ENCODE measurements at regions of chr13 and their contacts with region 1.

Region 1: DNA sequence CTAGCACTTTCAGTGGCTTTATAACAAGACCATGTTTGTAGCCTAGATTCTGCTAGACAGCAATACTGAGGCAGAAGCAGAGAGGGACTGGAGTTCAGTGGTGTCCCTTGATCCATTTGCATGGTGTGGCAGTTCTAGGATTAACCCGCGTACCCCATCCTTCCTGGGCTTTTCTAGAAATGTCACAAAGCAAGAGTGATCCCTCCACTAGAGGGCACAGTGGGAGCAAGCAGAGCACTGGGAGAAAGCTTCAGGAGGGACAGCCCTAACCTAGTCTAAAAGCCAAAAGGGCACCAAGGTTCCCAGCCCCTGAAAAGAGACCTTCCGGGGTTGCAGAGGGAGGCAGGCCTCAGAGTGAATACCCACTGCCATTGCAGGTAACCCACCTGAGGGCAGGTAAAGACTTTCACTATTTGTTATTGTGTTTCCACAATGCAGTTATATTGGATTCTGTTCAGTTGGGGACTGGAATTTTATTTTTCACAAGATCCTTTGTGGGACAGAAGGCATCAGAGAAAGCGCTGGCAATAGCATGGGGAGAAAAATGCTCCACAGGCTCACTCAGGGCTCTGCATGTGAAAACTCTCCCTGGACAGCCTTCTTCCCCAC is 170.6 kb downstream of the FLT1 start:
- DNase-seq: peak; percentile 14 to 60 (median 51)
- ATAC-seq: peak; percentile 86
- H3K4me3 ChIP-seq: no peak overlapping the region
- H3K4me3 Mint-ChIP-seq: no peak overlapping the region
- H3K27ac ChIP-seq: no peak overlapping the region
- H3K27ac Mint-ChIP-seq: no peak overlapping the region
- H3K4me1 ChIP-seq: no peaks in the 10 kb centered on the region
- H3K4me1 Mint-ChIP-seq: peaks cover 0 to 5% (median 0%) of the 10 kb centered on the region in 7 donors
- H3K27me3 ChIP-seq: no peaks in the 10 kb centered on the region
- H3K27me3 Mint-ChIP-seq: peaks cover 0 to 6% (median 0%) of the 10 kb centered on the region in 5 donors

Region 2: DNA sequence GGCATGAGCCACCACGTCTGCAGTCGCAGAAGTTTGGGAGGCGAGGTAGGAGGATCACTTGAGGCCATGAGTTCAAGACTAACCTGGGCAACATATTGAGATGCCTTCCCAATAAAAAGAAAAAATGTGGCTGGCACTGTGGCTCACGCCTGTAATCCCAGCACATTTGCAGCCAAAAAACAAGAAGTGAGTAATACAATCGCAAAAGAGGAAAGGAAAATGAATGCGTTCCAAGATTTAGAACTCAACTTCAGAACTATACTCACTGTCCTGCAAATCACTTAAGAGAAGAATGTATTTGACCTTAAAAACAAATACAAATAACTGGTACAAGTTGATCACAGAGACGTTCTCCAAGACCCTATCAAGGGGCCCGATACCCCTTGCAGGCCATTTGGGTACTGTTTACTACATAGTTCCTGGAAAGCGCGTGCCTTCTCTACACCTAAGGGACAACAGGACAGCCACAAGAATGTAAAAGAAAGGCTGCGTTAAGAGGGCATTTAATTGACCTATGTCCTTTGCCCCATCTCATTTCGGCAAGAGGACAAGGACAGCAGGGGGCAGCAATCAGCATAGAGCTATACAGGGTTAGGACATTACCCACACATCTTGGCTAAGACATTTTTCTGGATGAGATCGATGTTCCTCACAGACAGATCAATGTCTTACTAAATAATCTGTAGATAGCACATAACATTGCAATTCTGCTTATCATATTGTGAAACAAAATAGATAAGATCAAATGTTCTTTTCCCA is 265.2 kb before region 1 on chr13:
- CTCF ChIA-PET with region 1: no interaction called
- POLR2A ChIA-PET with region 1: no interaction called
- intact Hi-C with region 1: loop called in 1 of 2 experiments (anchors 2 kb)
- DNase-seq: peak in 7 of 9 donors; percentile 10 to 33 (median 17)
- ATAC-seq: peak; percentile 38
- H3K4me3 ChIP-seq: no peak overlapping the region
- H3K4me3 Mint-ChIP-seq: no peak overlapping the region
- H3K27ac ChIP-seq: no peak overlapping the region
- H3K27ac Mint-ChIP-seq: peak overlapping the region in 1 of 9 donors; percentile 62
- H3K4me1 ChIP-seq: no peaks in the 10 kb centered on the region
- H3K4me1 Mint-ChIP-seq: peaks cover 0 to 4% (median 0%) of the 10 kb centered on the region in 7 donors
- H3K27me3 ChIP-seq: peaks cover 2 to 3% of the 10 kb centered on the region in 2 donors
- H3K27me3 Mint-ChIP-seq: peaks cover 8 to 24% (median 16%) of the 10 kb centered on the region in 5 donors

Region 3: DNA sequence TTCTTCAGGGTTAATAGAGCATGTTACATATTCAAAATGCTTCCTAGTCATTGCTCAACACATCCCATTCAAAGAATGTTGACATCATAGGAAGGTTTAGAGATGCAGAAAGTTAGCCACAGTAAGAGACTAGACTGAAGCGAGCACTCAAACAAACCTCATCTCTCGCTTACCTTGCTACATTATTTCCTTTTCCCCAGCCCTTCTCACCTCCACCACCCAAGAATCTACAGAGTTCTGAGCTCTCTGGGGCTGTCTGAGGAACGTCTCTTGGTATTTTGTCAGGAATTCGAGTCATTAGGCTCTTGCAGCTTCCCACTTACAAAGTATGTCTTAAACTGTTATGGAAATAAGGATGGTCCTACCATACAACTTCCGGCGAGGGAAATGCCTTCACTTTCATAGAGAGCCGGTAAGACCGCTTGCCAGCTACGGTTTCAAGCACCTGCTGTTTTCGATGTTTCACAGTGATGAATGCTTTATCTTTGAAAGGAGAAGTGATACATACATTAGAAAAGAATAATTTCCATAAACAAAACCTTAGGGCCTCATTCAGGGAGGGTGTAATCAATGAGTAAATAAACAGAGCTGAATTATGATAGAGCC is 105.5 kb after region 1 on chr13:
- CTCF ChIA-PET with region 1: no interaction called
- POLR2A ChIA-PET with region 1: no interaction called
- intact Hi-C with region 1: no loop called
- DNase-seq: no peak
- ATAC-seq: no peak
- H3K4me3 ChIP-seq: no peak overlapping the region
- H3K4me3 Mint-ChIP-seq: no peak overlapping the region
- H3K27ac ChIP-seq: no peak overlapping the region
- H3K27ac Mint-ChIP-seq: peak overlapping the region in 1 of 9 donors; percentile 18
- H3K4me1 ChIP-seq: no peaks in the 10 kb centered on the region
- H3K4me1 Mint-ChIP-seq: peaks cover 0 to 8% (median 0%) of the 10 kb centered on the region in 7 donors
- H3K27me3 ChIP-seq: peaks cover 0 to 3% of the 10 kb centered on the region in 2 donors
- H3K27me3 Mint-ChIP-seq: peaks cover 0 to 9% (median 0%) of the 10 kb centered on the region in 5 donors

Region 4: GRCh38 chr13:28658796-28659620 is 334.7 kb after region 1 on chr13 and contains the start of gene POMP:
- CTCF ChIA-PET with region 1: no interaction called
- POLR2A ChIA-PET with region 1: no interaction called
- intact Hi-C with region 1: loop called in 1 of 2 experiments (anchors 1 kb)
- DNase-seq: peak; percentile 83 to 96 (median 93)
- ATAC-seq: peak; percentile 95
- H3K4me3 ChIP-seq: peak within 1 kb of the TSS; percentile 86
- H3K4me3 Mint-ChIP-seq: peak within 1 kb of the TSS; percentile 88 to 100 (median 98)
- H3K27ac ChIP-seq: peak within 1 kb of the TSS; percentile 96
- H3K27ac Mint-ChIP-seq: peak within 1 kb of the TSS; percentile 94 to 99 (median 99)
- H3K4me1 ChIP-seq: peaks cover 25 to 29% of the 10 kb centered on the region in 2 donors
- H3K4me1 Mint-ChIP-seq: peaks cover 38 to 84% (median 69%) of the 10 kb centered on the region in 7 donors
- H3K27me3 ChIP-seq: no peaks in the 10 kb centered on the region
- H3K27me3 Mint-ChIP-seq: no peaks in the 10 kb centered on the region
- total RNA-seq, gene POMP: 18.8 to 97.0 (median 21.2) TPM

Region 5: DNA sequence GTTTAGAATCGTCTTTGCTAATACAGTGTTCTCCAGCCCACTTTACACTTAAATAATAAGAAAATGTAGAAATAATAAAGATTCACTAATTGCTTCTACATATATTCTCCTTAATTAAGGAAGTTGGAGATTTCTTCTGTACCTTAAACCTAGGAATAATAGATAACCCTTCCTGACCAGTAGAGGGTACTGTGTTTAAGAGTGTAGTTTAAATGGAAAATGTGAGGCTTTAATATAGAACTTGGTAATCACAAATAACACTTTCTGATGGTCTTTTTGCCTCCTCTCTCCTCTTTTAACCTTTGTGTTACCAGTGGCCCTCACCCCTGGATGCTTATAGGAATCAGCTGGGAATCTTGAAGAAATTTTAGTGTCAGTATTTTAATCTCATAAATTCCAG is 355.3 kb after region 1 on chr13:
- CTCF ChIA-PET with region 1: no interaction called
- POLR2A ChIA-PET with region 1: no interaction called
- intact Hi-C with region 1: loop called in 1 of 2 experiments (anchors 2 kb)
- DNase-seq: no peak
- ATAC-seq: peak; percentile 45
- H3K4me3 ChIP-seq: no peak overlapping the region
- H3K4me3 Mint-ChIP-seq: no peak overlapping the region
- H3K27ac ChIP-seq: no peak overlapping the region
- H3K27ac Mint-ChIP-seq: peak overlapping the region in 4 of 9 donors; percentile 30 to 57 (median 49)
- H3K4me1 ChIP-seq: no peaks in the 10 kb centered on the region
- H3K4me1 Mint-ChIP-seq: peaks cover 0 to 2% (median 0%) of the 10 kb centered on the region in 7 donors
- H3K27me3 ChIP-seq: no peaks in the 10 kb centered on the region
- H3K27me3 Mint-ChIP-seq: no peaks in the 10 kb centered on the region

Region 6: GRCh38 chr13:28792992-28793391 is 468.7 kb after region 1 on chr13:
- CTCF ChIA-PET with region 1: interaction called, 16 read pairs
- POLR2A ChIA-PET with region 1: no interaction called
- intact Hi-C with region 1: loop called in 1 of 2 experiments (anchors 1 kb)
- DNase-seq: no peak
- ATAC-seq: no peak
- H3K4me3 ChIP-seq: no peak overlapping the region
- H3K4me3 Mint-ChIP-seq: no peak overlapping the region
- H3K27ac ChIP-seq: no peak overlapping the region
- H3K27ac Mint-ChIP-seq: no peak overlapping the region
- H3K4me1 ChIP-seq: no peaks in the 10 kb centered on the region
- H3K4me1 Mint-ChIP-seq: peaks cover 0 to 6% (median 4%) of the 10 kb centered on the region in 7 donors
- H3K27me3 ChIP-seq: no peaks in the 10 kb centered on the region
- H3K27me3 Mint-ChIP-seq: peaks cover 16 to 42% (median 30%) of the 10 kb centered on the region in 5 donors

Measured in naive thymus-derived CD4-positive, alpha-beta T cell (primary cell).